A549 (cell line): ENCODE measurements at regions of chr12 and their contacts with region 1.

Region 1: GRCh38 chr12:95848575-95849388 is 10.0 kb upstream of the SNRPF start:
- DNase-seq: peak; percentile 55 to 78
- ATAC-seq: peak; percentile 89 to 93
- H3K4me3 ChIP-seq: no peak overlapping the region
- H3K27ac ChIP-seq: peak overlapping the region; percentile 57 to 61
- H3K4me1 ChIP-seq: peaks cover 8% of the 10 kb centered on the region
- CTCF ChIP-seq: peak; percentile 76
- EP300 ChIP-seq: no peak
- POLR2A ChIP-seq: no peak
- RAD21 ChIP-seq: peak; percentile 91

Region 2: GRCh38 chr12:95574799-95575452 is 273.9 kb before region 1 on chr12:
- CTCF ChIA-PET with region 1: interaction called, 92 read pairs
- POLR2A ChIA-PET with region 1: no interaction called
- DNase-seq: peak; percentile 50 to 61
- ATAC-seq: peak; percentile 68 to 87; a peak in 5 of 6 replicates
- H3K4me3 ChIP-seq: no peak overlapping the region
- H3K27ac ChIP-seq: no peak overlapping the region
- H3K4me1 ChIP-seq: no peaks in the 10 kb centered on the region
- CTCF ChIP-seq: peak; percentile 76
- EP300 ChIP-seq: no peak
- POLR2A ChIP-seq: no peak
- RAD21 ChIP-seq: peak; percentile 52 to 66

Region 3: DNA sequence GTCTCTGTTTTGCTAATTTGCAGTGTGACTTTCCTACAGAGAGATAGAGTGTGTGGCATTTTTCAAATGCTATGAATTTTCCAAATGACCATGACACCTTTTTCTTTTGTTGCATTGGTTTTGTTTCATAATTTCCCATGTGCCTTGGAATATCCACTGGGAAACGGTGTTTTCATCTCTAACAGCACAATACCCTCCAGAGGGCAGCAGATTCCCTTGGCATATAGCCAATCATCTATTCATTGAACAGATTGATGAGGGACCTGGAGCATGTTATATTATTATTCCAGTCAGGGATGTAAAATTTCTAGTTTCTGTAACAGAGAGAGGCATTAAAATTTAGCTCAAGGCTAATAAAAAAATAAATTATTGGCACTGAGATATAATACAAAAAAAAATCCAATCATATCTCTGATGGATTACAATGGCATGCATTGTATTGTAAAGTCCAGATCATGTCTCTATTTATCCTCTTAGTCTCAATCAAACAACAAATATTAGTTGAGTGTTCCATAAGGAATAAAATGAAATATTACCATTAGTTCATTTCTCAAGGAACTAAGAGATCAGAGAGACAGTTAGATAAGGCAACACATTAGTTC is 28.6 kb before region 1 on chr12:
- CTCF ChIA-PET with region 1: interaction called, 13 read pairs
- POLR2A ChIA-PET with region 1: no interaction called
- DNase-seq: peak; percentile 72 to 75
- ATAC-seq: peak in 1 of 2 experiments; percentile 82; a peak in 3 of 6 replicates
- H3K4me3 ChIP-seq: no peak overlapping the region
- H3K27ac ChIP-seq: no peak overlapping the region
- H3K4me1 ChIP-seq: peaks cover 4% of the 10 kb centered on the region; the same call in 2 of the 3 replicates
- CTCF ChIP-seq: peak; percentile 70
- EP300 ChIP-seq: no peak
- POLR2A ChIP-seq: no peak
- RAD21 ChIP-seq: peak; percentile 52 to 66